Activated naive CD4-positive, alpha-beta T cell treated with anti-CD3 and anti-CD28 coated beads, Interleukin-2, amount 10 ng/mL, durations not matched to agents 7 days and 5 days (primary cell): ENCODE measurements at regions of chr1 and their contacts with region 1.

Region 1: DNA sequence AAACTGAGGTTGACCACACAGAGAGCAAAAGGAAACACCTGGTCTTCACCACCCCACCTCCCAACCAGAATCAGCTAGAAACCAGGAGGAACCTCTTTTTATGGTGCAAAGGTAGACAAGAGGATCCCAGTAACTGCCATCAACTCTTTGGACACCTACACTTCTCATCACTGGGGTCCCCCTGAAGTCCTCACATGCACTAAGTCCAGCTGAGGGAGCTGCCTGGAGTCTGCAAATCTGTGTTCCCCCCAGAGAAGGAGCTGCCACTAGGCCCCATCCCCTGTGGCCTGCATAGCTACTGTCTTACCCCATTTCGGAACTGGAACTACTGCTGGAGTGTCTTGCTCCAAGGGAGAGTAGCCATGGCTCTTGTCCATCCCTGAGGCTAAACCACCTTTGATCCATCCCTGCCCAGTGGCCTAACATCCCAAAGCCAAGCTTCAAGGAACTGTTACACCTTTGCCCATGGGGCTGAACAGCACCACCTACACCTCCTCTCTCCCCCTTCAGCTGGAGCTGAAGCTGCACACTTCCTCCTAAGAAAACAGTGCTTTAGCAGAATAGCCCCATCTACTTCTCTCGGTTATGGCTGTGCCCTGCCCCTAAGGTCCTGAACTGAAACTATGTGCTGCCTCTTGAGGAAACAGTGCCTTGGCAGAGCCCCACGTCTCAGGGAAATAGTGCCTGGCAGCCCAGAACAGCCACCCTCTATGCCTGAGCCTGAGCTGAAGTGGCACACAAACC is 85.4 kb upstream of the CD53 start:
- DNase-seq: peak; percentile 77
- H3K4me3 Mint-ChIP-seq: peak overlapping the region; percentile 66
- H3K27ac Mint-ChIP-seq: peak overlapping the region; percentile 97
- H3K4me1 Mint-ChIP-seq: peaks cover 73% of the 10 kb centered on the region
- H3K27me3 Mint-ChIP-seq: no peaks in the 10 kb centered on the region

Region 2: DNA sequence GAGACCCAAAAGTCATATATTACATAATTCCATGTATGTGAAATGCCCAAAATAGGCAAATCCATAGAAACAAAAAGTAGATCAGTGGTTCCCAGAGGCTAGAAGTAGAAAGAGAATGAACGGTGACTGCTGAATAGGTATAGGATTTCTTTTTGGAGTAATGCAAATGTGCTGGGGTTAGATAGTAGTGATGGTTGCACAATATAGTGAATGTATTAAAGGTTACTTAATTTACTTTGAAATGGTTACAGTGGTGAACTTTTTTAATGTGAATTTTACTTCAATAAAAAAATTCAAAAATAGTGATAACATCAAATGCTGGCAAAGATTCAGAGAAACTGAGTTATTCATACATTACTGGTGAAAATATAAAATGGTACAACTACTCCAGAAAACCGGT is 53.2 kb after region 1 on chr1:
- CTCF ChIA-PET with region 1: no interaction called
- DNase-seq: no peak
- H3K4me3 Mint-ChIP-seq: no peak overlapping the region
- H3K27ac Mint-ChIP-seq: no peak overlapping the region
- H3K4me1 Mint-ChIP-seq: no peaks in the 10 kb centered on the region
- H3K27me3 Mint-ChIP-seq: no peaks in the 10 kb centered on the region

Region 3: GRCh38 chr1:110951161-110951560 is 163.7 kb after region 1 on chr1:
- CTCF ChIA-PET with region 1: no interaction called
- DNase-seq: no peak
- H3K4me3 Mint-ChIP-seq: no peak overlapping the region
- H3K27ac Mint-ChIP-seq: no peak overlapping the region
- H3K4me1 Mint-ChIP-seq: no peaks in the 10 kb centered on the region
- H3K27me3 Mint-ChIP-seq: no peaks in the 10 kb centered on the region

Region 4: DNA sequence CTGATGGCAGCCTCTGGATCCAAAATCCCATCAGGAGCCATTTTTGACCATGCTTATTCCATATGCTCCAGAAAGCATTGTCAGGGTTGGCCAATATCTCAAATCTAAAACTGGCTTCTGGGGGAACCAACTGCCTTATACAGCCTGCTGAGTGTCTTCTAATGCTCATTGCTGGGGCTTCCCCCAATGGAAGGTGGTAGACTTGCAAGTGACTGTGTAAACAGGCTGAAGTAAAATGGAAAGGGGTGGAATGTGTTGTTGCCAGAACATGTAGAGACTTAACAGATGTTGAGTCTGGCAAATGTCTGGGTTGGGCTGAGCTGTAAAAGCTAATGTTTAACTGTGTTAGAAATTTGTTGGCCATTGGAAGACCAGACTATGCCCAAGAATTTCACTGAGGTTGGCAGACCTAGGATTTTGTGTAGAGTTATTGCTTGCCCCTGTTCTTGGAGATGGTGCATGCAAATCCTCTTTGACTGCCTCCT is 198.9 kb after region 1 on chr1:
- CTCF ChIA-PET with region 1: interaction called, 14 read pairs
- DNase-seq: no peak
- H3K4me3 Mint-ChIP-seq: no peak overlapping the region
- H3K27ac Mint-ChIP-seq: no peak overlapping the region
- H3K4me1 Mint-ChIP-seq: peaks cover 14% of the 10 kb centered on the region
- H3K27me3 Mint-ChIP-seq: peaks cover 4% of the 10 kb centered on the region